ENCODE measurements at regions of chr7 and their contacts with region 1.

Region 1: GRCh38 chr7:25831831-25832411 is 320.1 kb upstream of the NFE2L3 start:
- DNase-seq: no peak
- H3K4me3 ChIP-seq: no peak overlapping the region
- H3K27ac ChIP-seq: no peak overlapping the region
- H3K4me1 ChIP-seq: peaks cover 0 to 3% of the 10 kb centered on the region in 2 experiments; a peak in 1 of 4 replicates
- H3K27me3 ChIP-seq: no peaks in the 10 kb centered on the region
- CTCF ChIP-seq: no peak
- EP300 ChIP-seq: no peak
- RAD21 ChIP-seq: no peak

Region 2: GRCh38 chr7:25820432-25821040 is 11.4 kb before region 1 on chr7:
- CTCF ChIA-PET with region 1: interaction called, 13 read pairs
- POLR2A ChIA-PET with region 1: no interaction called
- DNase-seq: peak; percentile 24
- H3K4me3 ChIP-seq: no peak overlapping the region
- H3K27ac ChIP-seq: no peak overlapping the region
- H3K4me1 ChIP-seq: no peaks in the 10 kb centered on the region
- H3K27me3 ChIP-seq: no peaks in the 10 kb centered on the region
- CTCF ChIP-seq: peak; percentile 76
- EP300 ChIP-seq: no peak
- RAD21 ChIP-seq: peak; percentile 29; the same call in 1 of the 2 replicates

Measured in SK-N-SH (cell line).